Heart left ventricle (tissue), 16 donors: ENCODE measurements at regions of chr11 and their contacts with region 1.

Region 1: DNA sequence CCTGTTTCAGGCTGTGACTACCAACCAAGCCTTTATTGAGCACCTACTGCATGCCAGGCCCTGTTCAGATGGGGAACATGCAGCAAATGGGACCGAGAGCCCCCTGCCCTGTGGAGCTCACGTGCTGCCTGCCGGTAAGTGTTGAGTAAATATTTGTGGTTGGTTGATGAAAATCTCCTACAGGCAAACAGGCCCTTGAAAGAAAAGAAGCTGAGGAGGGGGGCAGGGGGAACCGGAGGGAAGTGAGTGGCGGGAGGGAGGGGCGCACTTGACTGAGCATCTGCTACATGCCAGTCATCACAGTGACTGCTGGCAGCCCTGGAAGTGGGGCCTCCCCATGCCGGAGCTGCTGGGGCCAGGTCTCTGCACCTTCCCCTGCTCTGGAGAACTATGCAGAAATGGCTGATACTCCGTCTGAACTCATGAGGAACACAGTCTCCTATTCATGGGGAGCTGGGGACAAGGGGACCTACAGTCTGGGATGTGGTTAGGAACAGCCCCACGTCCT is 34.2 kb downstream of the MACROD1 start:
- DNase-seq: no peak
- ATAC-seq: no peak
- H3K4me3 ChIP-seq: no peak overlapping the region
- H3K27ac ChIP-seq: no peak overlapping the region
- H3K4me1 ChIP-seq: peaks cover 0 to 33% (median 2%) of the 10 kb centered on the region in 12 donors
- H3K27me3 ChIP-seq: no peaks in the 10 kb centered on the region
- CTCF ChIP-seq: no peak
- POLR2A ChIP-seq: no peak

Region 2: DNA sequence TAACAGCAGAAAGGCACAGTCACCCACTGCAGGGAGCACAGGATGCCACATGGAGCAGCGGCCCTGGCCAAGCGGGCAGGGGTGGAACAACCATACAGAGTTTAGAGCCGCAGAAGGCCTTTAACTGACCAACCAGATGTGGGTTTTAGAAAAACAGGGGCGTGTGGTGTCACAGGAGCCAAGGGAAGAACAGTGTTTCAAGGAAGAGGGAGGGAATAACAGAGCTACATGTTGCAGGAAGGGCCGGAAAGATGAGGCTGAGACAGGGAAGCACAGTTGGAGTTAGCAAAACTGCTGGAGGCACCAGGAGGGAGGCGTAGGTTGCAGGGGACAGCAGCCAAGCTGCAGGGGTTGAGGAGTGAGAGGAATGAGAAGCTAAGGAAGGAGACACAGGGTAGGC is 200.7 kb before region 1 on chr11:
- intact Hi-C with region 1: no loop called
- DNase-seq: no peak
- ATAC-seq: no peak
- H3K4me3 ChIP-seq: no peak overlapping the region
- H3K27ac ChIP-seq: no peak overlapping the region
- H3K4me1 ChIP-seq: peaks cover 0 to 4% (median 0%) of the 10 kb centered on the region in 12 donors
- H3K27me3 ChIP-seq: no peaks in the 10 kb centered on the region
- CTCF ChIP-seq: no peak
- POLR2A ChIP-seq: no peak

Region 3: GRCh38 chr11:64021757-64022093 is 110.0 kb before region 1 on chr11:
- intact Hi-C with region 1: loop called in 1 of 10 experiments (anchors 5 kb)
- DNase-seq: peak in 2 of 5 donors; percentile 41 to 74
- ATAC-seq: peak in 3 of 4 donors; percentile 35 to 53 (median 39)
- H3K4me3 ChIP-seq: no peak overlapping the region
- H3K27ac ChIP-seq: peak overlapping the region in 3 of 12 donors; percentile 30 to 59 (median 38)
- H3K4me1 ChIP-seq: peaks cover 0 to 36% (median 15%) of the 10 kb centered on the region in 12 donors
- H3K27me3 ChIP-seq: no peaks in the 10 kb centered on the region
- CTCF ChIP-seq: no peak
- POLR2A ChIP-seq: no peak

Region 4: DNA sequence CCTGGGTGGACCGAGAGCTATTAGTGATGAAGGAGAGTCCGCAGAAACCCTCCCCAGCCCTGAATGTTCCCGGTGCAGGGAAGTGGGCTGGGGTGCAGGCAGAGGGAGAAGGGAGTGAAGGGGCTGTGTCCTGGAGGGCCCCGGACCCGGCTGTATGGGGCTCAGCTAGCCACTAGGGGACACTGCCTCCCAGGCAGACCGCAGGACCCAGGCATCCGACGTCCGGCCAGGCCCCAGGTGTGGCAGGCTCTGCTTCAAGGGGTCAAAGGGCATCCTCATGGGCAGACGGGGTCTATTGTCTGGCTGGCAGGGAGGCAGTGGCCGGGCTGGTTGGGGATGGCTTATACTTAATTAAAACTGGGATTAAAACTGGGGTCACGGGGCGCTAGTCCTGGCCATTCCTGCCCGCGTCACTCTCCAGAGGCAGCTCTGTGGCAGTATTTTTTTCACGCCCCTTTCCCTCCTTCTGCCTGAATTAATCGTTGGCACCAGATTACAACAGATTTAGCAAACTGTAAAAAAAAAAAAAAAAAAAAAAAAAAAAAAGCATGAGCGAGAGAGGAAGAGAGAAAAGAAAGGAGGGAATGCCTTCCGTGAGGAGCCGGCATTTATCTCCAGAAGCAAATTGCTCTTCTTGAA is 90.9 kb before region 1 on chr11:
- intact Hi-C with region 1: loop called in 1 of 10 experiments (anchors 5 kb)
- DNase-seq: no peak
- ATAC-seq: no peak
- H3K4me3 ChIP-seq: no peak overlapping the region
- H3K27ac ChIP-seq: no peak overlapping the region
- H3K4me1 ChIP-seq: peaks cover 0 to 14% (median 10%) of the 10 kb centered on the region in 12 donors
- H3K27me3 ChIP-seq: peaks cover 0 to 24% (median 0%) of the 10 kb centered on the region in 9 donors
- CTCF ChIP-seq: peak in 10 of 12 donors; percentile 5 to 43 (median 28)
- POLR2A ChIP-seq: no peak

Region 5: DNA sequence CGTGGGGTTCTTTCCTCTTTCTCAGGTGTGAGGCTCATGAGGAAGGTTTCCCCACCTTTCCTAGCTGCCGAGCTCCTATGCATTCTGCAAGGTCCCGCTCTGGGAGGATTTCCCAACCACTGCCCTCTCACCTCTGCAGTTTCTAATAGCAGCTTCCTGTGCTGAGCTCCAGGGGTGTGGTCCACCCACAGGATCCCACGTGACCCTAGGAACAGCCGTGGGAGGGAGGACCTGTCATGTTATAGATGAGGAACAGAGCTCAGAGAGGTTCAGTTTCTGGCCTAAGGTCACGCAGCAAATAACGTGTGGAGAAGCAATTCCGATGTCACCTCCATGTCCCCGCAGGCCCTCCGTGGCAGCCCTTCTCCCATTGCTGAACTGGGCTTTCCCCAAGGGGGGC is 57.5 kb before region 1 on chr11:
- intact Hi-C with region 1: no loop called
- DNase-seq: no peak
- ATAC-seq: no peak
- H3K4me3 ChIP-seq: no peak overlapping the region
- H3K27ac ChIP-seq: no peak overlapping the region
- H3K4me1 ChIP-seq: peaks cover 4 to 82% (median 14%) of the 10 kb centered on the region in 12 donors
- H3K27me3 ChIP-seq: no peaks in the 10 kb centered on the region
- CTCF ChIP-seq: no peak
- POLR2A ChIP-seq: no peak

Region 6: GRCh38 chr11:64088162-64089026 is 43.3 kb before region 1 on chr11:
- intact Hi-C with region 1: no loop called
- DNase-seq: no peak
- ATAC-seq: no peak
- H3K4me3 ChIP-seq: no peak overlapping the region
- H3K27ac ChIP-seq: no peak overlapping the region
- H3K4me1 ChIP-seq: peaks cover 0 to 48% (median 2%) of the 10 kb centered on the region in 12 donors
- H3K27me3 ChIP-seq: no peaks in the 10 kb centered on the region
- CTCF ChIP-seq: no peak
- POLR2A ChIP-seq: no peak